Caco-2 (cell line): ENCODE measurements at regions of chr21 and their contacts with region 1.

Region 1: GRCh38 chr21:26883768-26884167 is 38.6 kb upstream of the ADAMTS1 start:
- DNase-seq: no peak
- H3K4me3 ChIP-seq: no peak overlapping the region
- H3K4me3 Mint-ChIP-seq: no peak overlapping the region
- H3K27ac Mint-ChIP-seq: peak overlapping the region; percentile 58
- H3K4me1 ChIP-seq: peaks cover 21% of the 10 kb centered on the region
- H3K4me1 Mint-ChIP-seq: peaks cover 11% of the 10 kb centered on the region
- H3K27me3 ChIP-seq: no peaks in the 10 kb centered on the region
- H3K27me3 Mint-ChIP-seq: no peaks in the 10 kb centered on the region
- CTCF ChIP-seq: no peak

Region 2: DNA sequence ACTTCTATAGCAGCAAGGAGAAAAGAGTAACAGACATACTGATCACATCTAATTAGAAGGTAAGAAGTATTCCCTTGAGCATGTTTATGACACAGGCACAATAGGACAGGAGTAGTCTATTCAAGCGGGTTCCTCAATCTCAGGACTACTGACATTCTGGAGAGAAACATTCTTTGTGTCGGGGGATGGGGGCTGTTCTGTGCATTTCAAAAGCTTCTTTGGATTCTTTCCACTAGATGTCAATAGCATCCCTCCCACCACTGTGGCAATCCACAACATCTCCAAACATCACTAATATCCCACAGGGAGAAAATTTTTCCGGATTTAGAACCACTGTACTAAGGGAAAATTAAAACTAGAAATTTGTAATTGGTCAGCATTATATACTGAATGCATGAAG is 26.2 kb after region 1 on chr21:
- CTCF ChIA-PET with region 1: no interaction called
- POLR2A ChIA-PET with region 1: no interaction called
- intact Hi-C with region 1: loop called (anchors 2 kb)
- DNase-seq: peak; percentile 44 to 53
- H3K4me3 ChIP-seq: no peak overlapping the region
- H3K4me3 Mint-ChIP-seq: no peak overlapping the region
- H3K27ac Mint-ChIP-seq: no peak overlapping the region
- H3K4me1 ChIP-seq: no peaks in the 10 kb centered on the region
- H3K4me1 Mint-ChIP-seq: no peaks in the 10 kb centered on the region
- H3K27me3 ChIP-seq: no peaks in the 10 kb centered on the region
- H3K27me3 Mint-ChIP-seq: no peaks in the 10 kb centered on the region
- CTCF ChIP-seq: peak in 1 of 2 experiments; percentile 24

Region 3: DNA sequence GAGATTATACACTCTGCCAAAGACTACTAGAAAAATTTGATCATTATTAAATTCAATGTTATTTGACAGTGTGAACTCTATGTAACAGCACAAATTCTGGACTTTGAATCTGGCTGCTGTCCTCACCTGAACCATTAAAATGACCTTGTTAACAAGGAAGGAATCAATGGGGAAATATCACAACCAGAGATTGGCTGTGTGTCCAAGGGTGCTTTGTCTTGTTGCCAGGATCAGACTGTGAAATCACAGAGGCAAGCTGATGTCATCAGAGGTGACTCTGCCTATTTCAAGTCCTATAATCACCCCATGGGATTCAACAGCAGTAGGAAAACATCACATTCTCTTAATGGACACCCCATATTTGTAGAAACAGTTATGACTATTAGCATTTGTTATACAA is 36.3 kb after region 1 on chr21:
- CTCF ChIA-PET with region 1: no interaction called
- POLR2A ChIA-PET with region 1: no interaction called
- intact Hi-C with region 1: no loop called
- DNase-seq: no peak
- H3K4me3 ChIP-seq: no peak overlapping the region
- H3K4me3 Mint-ChIP-seq: no peak overlapping the region
- H3K27ac Mint-ChIP-seq: no peak overlapping the region
- H3K4me1 ChIP-seq: 0 out of 2 replicates have a peak, but pooled peaks cover 4% of the 10 kb centered on the region
- H3K4me1 Mint-ChIP-seq: peaks cover 6% of the 10 kb centered on the region
- H3K27me3 ChIP-seq: no peaks in the 10 kb centered on the region
- H3K27me3 Mint-ChIP-seq: no peaks in the 10 kb centered on the region
- CTCF ChIP-seq: no peak

Region 4: DNA sequence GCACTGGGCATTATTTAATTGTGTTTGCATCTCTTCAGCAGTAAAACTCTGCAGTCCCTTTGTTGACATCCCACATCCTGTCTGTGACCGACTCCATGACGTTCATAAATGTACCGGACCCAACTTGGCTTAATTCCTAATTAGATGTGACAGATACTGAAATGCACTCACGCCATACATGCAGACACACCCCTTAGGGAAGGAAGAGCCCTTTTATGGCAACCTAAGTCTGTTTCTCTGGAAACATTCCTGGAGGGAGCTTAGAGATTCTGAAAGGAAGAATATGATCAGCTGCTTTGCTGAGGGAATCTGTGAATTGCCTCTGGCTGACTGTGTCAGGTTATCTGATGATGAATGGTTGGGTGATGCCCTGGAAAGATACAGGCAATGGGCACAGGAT is 49.7 kb after region 1 on chr21:
- CTCF ChIA-PET with region 1: no interaction called
- POLR2A ChIA-PET with region 1: no interaction called
- intact Hi-C with region 1: no loop called
- DNase-seq: no peak
- H3K4me3 ChIP-seq: no peak overlapping the region
- H3K4me3 Mint-ChIP-seq: no peak overlapping the region
- H3K27ac Mint-ChIP-seq: no peak overlapping the region
- H3K4me1 ChIP-seq: no peaks in the 10 kb centered on the region
- H3K4me1 Mint-ChIP-seq: no peaks in the 10 kb centered on the region
- H3K27me3 ChIP-seq: no peaks in the 10 kb centered on the region
- H3K27me3 Mint-ChIP-seq: peaks cover 5% of the 10 kb centered on the region
- CTCF ChIP-seq: no peak